WTC11 (cell line): ENCODE measurements at regions of chr15 and their contacts with region 1.

Region 1: DNA sequence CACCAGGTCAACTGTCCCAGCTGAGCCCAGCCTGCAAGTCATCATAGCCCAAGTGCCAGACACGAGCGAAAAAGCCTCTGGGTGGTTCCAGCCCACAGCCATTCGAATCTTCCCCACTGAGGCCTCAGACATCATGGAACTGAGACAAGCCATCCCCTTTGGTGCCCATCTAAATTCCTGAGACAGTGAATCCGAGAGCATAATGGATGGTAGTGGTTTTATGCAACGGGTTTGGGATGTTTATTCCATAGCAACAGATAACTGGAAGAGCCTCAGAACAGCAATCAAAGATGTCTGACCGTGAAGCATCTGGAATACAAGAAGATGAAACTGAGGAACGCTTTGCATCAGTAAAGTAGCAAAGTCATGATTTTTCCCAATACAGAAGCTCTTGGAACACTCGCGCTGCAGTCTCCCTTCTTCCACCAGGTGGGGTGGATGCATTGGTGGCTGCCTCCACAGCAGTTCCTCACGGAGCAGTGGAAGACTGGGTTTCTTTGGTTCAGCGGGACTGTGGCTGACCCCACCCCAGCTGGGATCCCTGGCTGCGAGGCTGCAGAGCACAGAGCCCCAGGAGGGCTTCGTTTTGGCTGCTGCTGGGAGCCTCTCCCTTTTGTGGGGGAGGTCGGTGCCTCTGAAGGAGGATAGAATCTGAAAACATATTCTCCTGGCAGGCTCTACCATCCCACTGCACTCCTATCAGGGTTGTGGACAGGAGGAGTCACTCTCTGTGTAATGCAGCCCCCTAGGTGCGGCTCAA is 26.4 kb upstream of the PDE8A start:
- DNase-seq: peak; percentile 70
- ATAC-seq: peak; percentile 96
- H3K4me3 Mint-ChIP-seq: no peak overlapping the region
- H3K27ac Mint-ChIP-seq: no peak overlapping the region
- H3K4me1 Mint-ChIP-seq: peaks cover 22% of the 10 kb centered on the region
- H3K27me3 Mint-ChIP-seq: no peaks in the 10 kb centered on the region
- CTCF ChIP-seq: no peak

Region 2: DNA sequence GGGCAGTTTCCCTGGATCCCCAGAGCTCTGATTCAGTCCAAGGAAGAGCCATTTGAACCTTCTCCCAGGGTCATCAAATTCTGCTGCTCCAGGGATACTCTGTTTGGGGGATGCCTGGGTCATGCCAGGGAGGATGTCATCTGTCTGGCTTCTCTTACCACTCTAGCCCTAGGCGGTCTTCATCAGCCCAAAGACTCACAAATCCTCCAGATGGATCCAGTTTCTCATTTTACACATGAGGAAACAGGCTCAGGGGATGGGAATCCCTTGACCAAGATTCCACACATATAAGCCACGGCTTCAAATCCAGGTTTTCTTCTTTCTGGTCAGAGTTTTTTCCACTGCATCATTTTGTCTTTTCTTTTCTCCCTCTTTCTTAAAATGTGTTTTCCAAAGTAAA is 34.1 kb before region 1 on chr15:
- CTCF ChIA-PET with region 1: no interaction called
- POLR2A ChIA-PET with region 1: no interaction called
- DNase-seq: no peak
- ATAC-seq: no peak
- H3K4me3 Mint-ChIP-seq: no peak overlapping the region
- H3K27ac Mint-ChIP-seq: no peak overlapping the region
- H3K4me1 Mint-ChIP-seq: peaks cover 7% of the 10 kb centered on the region
- H3K27me3 Mint-ChIP-seq: no peaks in the 10 kb centered on the region
- CTCF ChIP-seq: no peak

Region 3: GRCh38 chr15:84981054-84981710 is 25.9 kb after region 1 on chr15:
- CTCF ChIA-PET with region 1: interaction called, 22 read pairs
- POLR2A ChIA-PET with region 1: interaction called, 5 read pairs
- DNase-seq: peak; percentile 94
- ATAC-seq: peak; percentile 69
- H3K4me3 Mint-ChIP-seq: peak overlapping the region; percentile 89
- H3K27ac Mint-ChIP-seq: no peak overlapping the region; the same call in 1 of the 2 replicates
- H3K4me1 Mint-ChIP-seq: peaks cover 29% of the 10 kb centered on the region
- H3K27me3 Mint-ChIP-seq: peaks cover 54% of the 10 kb centered on the region
- CTCF ChIP-seq: no peak

Region 4: DNA sequence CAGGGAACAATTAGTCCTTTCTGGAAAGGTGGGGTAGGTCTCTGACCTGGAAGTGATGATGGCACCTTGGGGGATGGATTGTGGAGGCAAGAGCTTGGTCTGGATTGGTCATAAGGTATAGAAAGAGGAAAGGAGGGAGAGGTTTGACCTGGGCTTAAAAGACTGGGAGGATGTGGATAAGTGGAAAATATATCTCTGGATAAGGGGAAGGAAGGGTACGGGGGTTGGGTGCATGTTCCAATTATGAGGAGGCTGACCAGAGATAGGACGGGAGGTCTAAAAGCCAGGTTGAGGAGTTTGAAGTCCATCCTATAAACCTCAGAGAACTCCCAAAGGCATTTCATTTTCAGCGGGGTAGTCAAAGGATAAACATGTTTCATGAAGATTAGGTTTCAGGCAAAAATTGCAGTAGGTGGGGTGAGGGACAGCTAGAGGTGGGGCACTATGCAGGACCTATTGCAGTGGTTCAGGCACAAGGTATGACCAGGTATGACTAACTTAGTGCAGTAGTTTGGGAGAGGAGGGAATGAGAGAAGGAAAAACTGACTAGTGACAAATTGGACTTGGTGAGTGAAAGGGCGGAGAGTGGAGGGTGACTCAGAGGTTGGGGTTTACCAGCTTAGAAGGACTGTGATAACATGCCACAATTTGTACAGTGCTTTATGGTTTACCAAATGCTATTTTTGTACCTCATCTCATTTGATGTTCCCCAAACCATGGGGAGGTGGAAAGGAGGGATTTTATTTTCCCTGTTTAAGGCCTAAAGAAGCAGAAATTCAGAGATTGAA is 37.1 kb after region 1 on chr15:
- CTCF ChIA-PET with region 1: no interaction called
- POLR2A ChIA-PET with region 1: no interaction called
- DNase-seq: no peak
- ATAC-seq: no peak
- H3K4me3 Mint-ChIP-seq: no peak overlapping the region
- H3K27ac Mint-ChIP-seq: no peak overlapping the region
- H3K4me1 Mint-ChIP-seq: peaks cover 24% of the 10 kb centered on the region
- H3K27me3 Mint-ChIP-seq: no peaks in the 10 kb centered on the region
- CTCF ChIP-seq: no peak